B cell (primary cell): ENCODE measurements at regions of chr9 and their contacts with region 1.

Region 1: GRCh38 chr9:127916665-127917613 is at the start of gene ST6GALNAC4:
- DNase-seq: peak; percentile 95
- ATAC-seq: peak; percentile 82
- H3K4me3 ChIP-seq: peak within 1 kb of the TSS; percentile 71 to 99 (median 79)
- H3K4me3 Mint-ChIP-seq: peak within 1 kb of the TSS; percentile 94
- H3K27ac ChIP-seq: peak within 1 kb of the TSS; percentile 89 to 91
- H3K27ac Mint-ChIP-seq: peak within 1 kb of the TSS; percentile 98
- H3K4me1 ChIP-seq: peaks cover 44 to 77% of the 10 kb centered on the region in 2 donors
- H3K4me1 Mint-ChIP-seq: peaks cover 68% of the 10 kb centered on the region
- H3K27me3 ChIP-seq: peaks cover 0 to 2% (median 0%) of the 10 kb centered on the region in 4 experiments
- H3K27me3 Mint-ChIP-seq: no peaks in the 10 kb centered on the region
- CTCF ChIP-seq: no peak
- total RNA-seq, gene ST6GALNAC4: 198 and 199 TPM in 2 replicates

Region 2: GRCh38 chr9:127503947-127504782 is 412.8 kb before region 1 on chr9:
- CTCF ChIA-PET with region 1: interaction called, 6 read pairs
- POLR2A ChIA-PET with region 1: no interaction called
- intact Hi-C with region 1: loop called (anchors 1 kb)
- DNase-seq: peak; percentile 82
- ATAC-seq: peak; percentile 85
- H3K4me3 ChIP-seq: no peak overlapping the region
- H3K4me3 Mint-ChIP-seq: no peak overlapping the region
- H3K27ac ChIP-seq: no peak overlapping the region
- H3K27ac Mint-ChIP-seq: no peak overlapping the region
- H3K4me1 ChIP-seq: no peaks in the 10 kb centered on the region
- H3K4me1 Mint-ChIP-seq: no peaks in the 10 kb centered on the region
- H3K27me3 ChIP-seq: no peaks in the 10 kb centered on the region
- H3K27me3 Mint-ChIP-seq: no peaks in the 10 kb centered on the region
- CTCF ChIP-seq: peak; percentile 79

Region 3: GRCh38 chr9:127734747-127735529 is 182.0 kb before region 1 on chr9 and contains the start of gene TOR2A:
- CTCF ChIA-PET with region 1: interaction called, 67 read pairs
- POLR2A ChIA-PET with region 1: interaction called, 17 read pairs
- intact Hi-C with region 1: loop called (anchors 1 kb)
- DNase-seq: peak; percentile 99
- ATAC-seq: peak; percentile 92
- H3K4me3 ChIP-seq: peak within 1 kb of the TSS in 4 of 5 experiments; percentile 45 to 76 (median 64)
- H3K4me3 Mint-ChIP-seq: peak within 1 kb of the TSS; percentile 85
- H3K27ac ChIP-seq: peak within 1 kb of the TSS; percentile 80 to 96
- H3K27ac Mint-ChIP-seq: peak within 1 kb of the TSS; percentile 88
- H3K4me1 ChIP-seq: peaks cover 11 to 16% of the 10 kb centered on the region in 2 donors
- H3K4me1 Mint-ChIP-seq: peaks cover 16% of the 10 kb centered on the region
- H3K27me3 ChIP-seq: no peaks in the 10 kb centered on the region
- H3K27me3 Mint-ChIP-seq: no peaks in the 10 kb centered on the region
- CTCF ChIP-seq: peak; percentile 49
- total RNA-seq, gene TOR2A: 14.3 and 15.8 TPM in 2 replicates

Region 4: DNA sequence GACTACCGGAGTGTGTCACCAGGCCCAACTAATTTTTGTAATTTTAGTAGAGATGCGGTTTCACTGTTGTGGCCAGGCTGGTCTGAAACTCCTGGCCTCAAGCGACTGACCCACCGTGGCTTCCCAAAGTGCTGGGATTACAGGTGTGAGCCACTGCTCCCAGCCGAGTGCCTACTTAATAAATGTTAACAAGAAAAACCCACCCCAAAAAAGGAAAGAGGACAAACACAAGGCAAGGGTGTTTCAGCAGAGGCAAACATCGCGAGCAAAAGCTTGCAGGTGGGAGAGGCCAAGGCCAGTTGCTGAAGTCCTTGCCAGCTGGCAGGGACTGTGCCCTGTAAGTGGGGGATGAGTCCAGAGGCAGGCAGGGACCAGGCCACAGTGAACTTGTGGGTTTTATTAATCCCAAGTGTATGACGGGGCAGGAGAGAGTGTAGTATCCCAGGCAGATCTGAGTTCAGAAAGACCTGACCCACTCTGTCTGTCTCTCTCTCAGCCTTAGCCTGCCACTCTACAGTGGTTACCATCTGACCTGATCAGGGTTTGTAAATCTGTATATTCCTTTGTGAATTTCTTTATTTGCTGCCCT is 120.6 kb before region 1 on chr9:
- CTCF ChIA-PET with region 1: interaction called, 14 read pairs
- POLR2A ChIA-PET with region 1: interaction called, 3 read pairs
- intact Hi-C with region 1: no loop called
- DNase-seq: no peak
- ATAC-seq: peak; percentile 29
- H3K4me3 ChIP-seq: no peak overlapping the region
- H3K4me3 Mint-ChIP-seq: peak overlapping the region; percentile 67
- H3K27ac ChIP-seq: peak overlapping the region; percentile 32 to 33
- H3K27ac Mint-ChIP-seq: peak overlapping the region; percentile 89
- H3K4me1 ChIP-seq: peaks cover 20 to 29% of the 10 kb centered on the region in 2 donors
- H3K4me1 Mint-ChIP-seq: peaks cover 29% of the 10 kb centered on the region
- H3K27me3 ChIP-seq: no peaks in the 10 kb centered on the region
- H3K27me3 Mint-ChIP-seq: no peaks in the 10 kb centered on the region
- CTCF ChIP-seq: no peak

Region 5: GRCh38 chr9:127877566-127877998 is 39.4 kb before region 1 on chr9 and contains the start of gene AK1:
- CTCF ChIA-PET with region 1: interaction called, 237 read pairs
- POLR2A ChIA-PET with region 1: interaction called, 4 read pairs
- intact Hi-C with region 1: loop called (anchors 1 kb)
- DNase-seq: no peak
- ATAC-seq: peak; percentile 18
- H3K4me3 ChIP-seq: peak within 1 kb of the TSS in 3 of 5 experiments; percentile 25 to 34 (median 30)
- H3K4me3 Mint-ChIP-seq: peak within 1 kb of the TSS; percentile 75
- H3K27ac ChIP-seq: no peak within 1 kb of the TSS
- H3K27ac Mint-ChIP-seq: peak within 1 kb of the TSS; percentile 32
- H3K4me1 ChIP-seq: peaks cover 21 to 34% of the 10 kb centered on the region in 2 donors
- H3K4me1 Mint-ChIP-seq: peaks cover 26% of the 10 kb centered on the region
- H3K27me3 ChIP-seq: peaks cover 0 to 12% (median 3%) of the 10 kb centered on the region in 4 experiments
- H3K27me3 Mint-ChIP-seq: no peaks in the 10 kb centered on the region
- CTCF ChIP-seq: no peak
- total RNA-seq, gene AK1: 31.8 and 35.0 TPM in 2 replicates

Region 6: GRCh38 chr9:127930231-127931091 is 13.5 kb after region 1 on chr9 and contains the start of gene PIP5KL1:
- CTCF ChIA-PET with region 1: interaction called, 12 read pairs
- POLR2A ChIA-PET with region 1: interaction called, 5 read pairs
- intact Hi-C with region 1: loop called (anchors 1 kb)
- DNase-seq: peak; percentile 86
- ATAC-seq: peak; percentile 75
- H3K4me3 ChIP-seq: peak within 1 kb of the TSS; percentile 31 to 78 (median 64)
- H3K4me3 Mint-ChIP-seq: peak within 1 kb of the TSS; percentile 86
- H3K27ac ChIP-seq: no peak within 1 kb of the TSS
- H3K27ac Mint-ChIP-seq: peak within 1 kb of the TSS; percentile 73
- H3K4me1 ChIP-seq: peaks cover 33 to 41% of the 10 kb centered on the region in 2 donors
- H3K4me1 Mint-ChIP-seq: peaks cover 44% of the 10 kb centered on the region
- H3K27me3 ChIP-seq: peaks cover 0 to 33% (median 13%) of the 10 kb centered on the region in 4 experiments
- H3K27me3 Mint-ChIP-seq: peaks cover 9% of the 10 kb centered on the region
- CTCF ChIP-seq: no peak
- total RNA-seq, gene PIP5KL1: 1.4 and 2.1 TPM in 2 replicates